Esophagus muscularis mucosa (tissue), 4 donors: ENCODE measurements at regions of chr1 and their contacts with region 1.

Region 1: DNA sequence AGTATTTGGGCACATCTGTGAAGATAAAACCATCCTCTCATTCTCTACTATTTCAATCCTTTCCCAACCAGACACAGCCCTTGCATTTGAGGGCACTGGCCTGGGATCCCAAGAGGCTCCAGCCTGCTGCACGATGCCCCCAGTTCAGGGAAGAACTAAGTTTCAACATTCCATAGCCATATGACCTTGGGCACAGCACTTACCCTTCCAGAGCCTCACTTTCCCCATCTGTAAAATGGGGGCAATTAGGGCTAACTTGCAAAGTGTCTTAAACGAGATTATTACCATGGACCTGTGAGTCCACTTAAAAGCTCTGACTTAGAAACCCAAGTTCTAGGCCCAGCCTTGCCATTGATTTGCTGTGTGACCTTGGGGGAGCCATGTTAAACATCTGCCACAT is 22.9 kb downstream of the CDCP2 start:
- DNase-seq: no peak
- H3K4me3 ChIP-seq: no peak overlapping the region
- H3K27ac ChIP-seq: no peak overlapping the region
- H3K4me1 ChIP-seq: no peaks in the 10 kb centered on the region
- H3K27me3 ChIP-seq: no peaks in the 10 kb centered on the region
- CTCF ChIP-seq: no peak
- EP300 ChIP-seq: no peak
- POLR2A ChIP-seq: no peak

Region 2: DNA sequence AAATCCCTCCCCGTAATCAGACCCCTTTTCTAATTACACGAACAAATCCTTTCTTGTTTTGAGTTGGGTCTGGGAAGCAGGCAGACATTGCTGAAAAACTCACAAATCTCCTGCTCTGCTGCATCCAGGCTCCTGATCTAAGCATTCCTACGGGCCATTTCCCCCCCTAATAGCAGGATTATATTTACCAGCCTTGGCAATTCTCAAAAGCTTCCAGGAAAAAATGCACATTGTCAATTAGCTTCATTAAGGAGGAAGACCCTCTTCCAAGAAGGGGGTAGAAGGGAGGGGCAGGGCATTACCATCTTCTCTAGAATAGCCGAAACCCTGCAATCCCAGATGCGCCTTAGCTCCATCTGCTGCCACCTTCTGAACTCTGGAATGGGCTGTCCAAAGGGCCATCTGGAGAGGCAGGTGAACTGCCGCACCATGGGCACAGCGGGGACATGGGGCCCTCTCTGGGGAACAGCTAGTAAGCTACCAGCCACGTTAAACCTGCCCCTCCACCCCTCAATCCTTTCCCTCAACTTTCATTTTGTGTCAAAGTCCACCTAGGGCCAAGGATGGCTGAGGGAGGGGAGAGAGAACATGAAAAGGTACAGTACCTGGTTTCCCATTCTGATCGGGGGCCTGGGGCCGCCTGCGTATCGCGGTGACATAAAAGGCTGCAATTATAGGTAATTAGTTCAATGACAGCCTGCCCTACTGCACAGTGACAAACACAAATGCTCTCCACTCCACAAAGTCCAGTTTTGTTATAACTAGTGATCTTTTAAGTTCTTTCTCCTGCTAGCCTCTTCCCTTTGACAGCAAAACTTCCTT is 126.9 kb after region 1 on chr1:
- intact Hi-C with region 1: loop called (anchors 2 kb)
- DNase-seq: no peak
- H3K4me3 ChIP-seq: no peak overlapping the region
- H3K27ac ChIP-seq: no peak overlapping the region
- H3K4me1 ChIP-seq: peaks cover 0 to 19% (median 6%) of the 10 kb centered on the region in 4 donors
- H3K27me3 ChIP-seq: no peaks in the 10 kb centered on the region
- CTCF ChIP-seq: no peak
- EP300 ChIP-seq: no peak
- POLR2A ChIP-seq: no peak